ENCODE measurements at regions of chr11 and their contacts with region 1.

Region 1: DNA sequence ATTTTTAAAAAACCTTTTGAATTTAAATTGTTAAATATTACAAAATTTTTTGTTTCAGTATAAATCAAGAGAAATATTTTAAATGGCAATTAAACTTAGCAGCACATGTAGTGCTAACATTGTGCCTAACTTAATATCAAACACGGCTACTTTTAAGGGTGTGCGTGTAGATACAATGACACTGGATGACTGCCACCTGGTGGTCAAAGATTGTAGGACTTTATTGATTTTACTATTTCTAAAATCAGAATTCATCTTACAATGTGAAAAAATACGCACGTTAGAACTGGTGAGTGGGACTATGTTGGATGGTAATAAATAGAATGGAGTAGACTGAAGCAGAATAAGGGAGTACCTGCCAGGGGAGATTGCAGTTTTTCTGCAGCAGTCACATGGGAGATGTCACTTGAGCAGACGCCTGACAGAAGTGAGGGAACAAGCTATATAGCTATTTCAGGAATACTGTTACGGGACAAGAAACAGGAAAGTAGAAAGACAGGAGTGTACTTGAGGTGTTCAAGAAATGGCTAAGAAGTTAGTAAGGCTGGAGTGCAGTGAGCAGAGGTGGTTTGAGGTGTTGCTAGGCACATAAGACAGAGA is 52.9 kb downstream of the UVRAG start:
- DNase-seq: peak; percentile 79
- ATAC-seq: peak; percentile 76
- H3K4me3 ChIP-seq: no peak overlapping the region
- H3K4me3 Mint-ChIP-seq: no peak overlapping the region
- H3K27ac ChIP-seq: no peak overlapping the region
- H3K27ac Mint-ChIP-seq: no peak overlapping the region
- H3K4me1 ChIP-seq: peaks cover 17 to 27% of the 10 kb centered on the region in 2 donors
- H3K4me1 Mint-ChIP-seq: peaks cover 52% of the 10 kb centered on the region
- H3K27me3 ChIP-seq: no peaks in the 10 kb centered on the region
- H3K27me3 Mint-ChIP-seq: no peaks in the 10 kb centered on the region
- CTCF ChIP-seq: peak; percentile 86

Region 2: DNA sequence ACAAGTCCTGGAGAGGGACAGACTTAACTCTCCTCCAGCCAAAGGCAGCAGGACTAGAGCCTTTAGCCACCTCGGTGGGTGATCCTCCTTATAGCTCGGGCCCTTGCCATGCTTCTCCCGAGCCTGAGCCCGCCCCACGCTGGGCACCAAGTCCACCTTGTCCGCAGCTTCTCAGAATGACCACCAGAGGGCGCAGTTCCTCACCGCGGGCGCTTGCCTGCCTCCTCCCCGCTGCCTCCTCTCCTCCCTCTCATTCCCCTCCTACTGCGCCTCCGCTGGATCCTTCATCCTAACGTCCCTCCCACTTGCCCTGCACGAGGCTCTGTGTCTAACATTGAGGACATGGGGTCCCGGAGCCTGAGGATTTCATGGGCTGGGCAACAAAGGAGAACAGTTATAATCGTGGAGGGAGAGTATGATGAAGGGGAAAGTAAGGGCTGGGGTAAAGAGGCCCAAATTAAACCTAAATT is 161.6 kb before region 1 on chr11:
- CTCF ChIA-PET with region 1: interaction called, 8 read pairs
- POLR2A ChIA-PET with region 1: no interaction called
- intact Hi-C with region 1: loop called (anchors 5 kb)
- DNase-seq: peak; percentile 82
- ATAC-seq: peak; percentile 84
- H3K4me3 ChIP-seq: no peak overlapping the region
- H3K4me3 Mint-ChIP-seq: no peak overlapping the region
- H3K27ac ChIP-seq: no peak overlapping the region
- H3K27ac Mint-ChIP-seq: no peak overlapping the region
- H3K4me1 ChIP-seq: peaks cover 0 to 7% of the 10 kb centered on the region in 2 donors
- H3K4me1 Mint-ChIP-seq: peaks cover 12% of the 10 kb centered on the region
- H3K27me3 ChIP-seq: peaks cover 0 to 8% (median 2%) of the 10 kb centered on the region in 4 experiments
- H3K27me3 Mint-ChIP-seq: peaks cover 11% of the 10 kb centered on the region
- CTCF ChIP-seq: peak; percentile 97

Region 3: GRCh38 chr11:75773595-75774353 is 94.1 kb before region 1 on chr11:
- CTCF ChIA-PET with region 1: interaction called, 12 read pairs
- POLR2A ChIA-PET with region 1: no interaction called
- intact Hi-C with region 1: no loop called
- DNase-seq: peak; percentile 84
- ATAC-seq: peak; percentile 76
- H3K4me3 ChIP-seq: peak overlapping the region in 1 of 5 experiments; percentile 37
- H3K4me3 Mint-ChIP-seq: peak overlapping the region; percentile 33
- H3K27ac ChIP-seq: peak overlapping the region; percentile 77 to 84
- H3K27ac Mint-ChIP-seq: peak overlapping the region; percentile 73
- H3K4me1 ChIP-seq: peaks cover 45 to 70% of the 10 kb centered on the region in 2 donors
- H3K4me1 Mint-ChIP-seq: peaks cover 77% of the 10 kb centered on the region
- H3K27me3 ChIP-seq: no peaks in the 10 kb centered on the region
- H3K27me3 Mint-ChIP-seq: no peaks in the 10 kb centered on the region
- CTCF ChIP-seq: no peak

Region 4: GRCh38 chr11:75802913-75803820 is 64.7 kb before region 1 on chr11:
- CTCF ChIA-PET with region 1: interaction called, 405 read pairs
- POLR2A ChIA-PET with region 1: no interaction called
- intact Hi-C with region 1: loop called (anchors 1 kb)
- DNase-seq: peak; percentile 82
- ATAC-seq: peak; percentile 94
- H3K4me3 ChIP-seq: no peak overlapping the region
- H3K4me3 Mint-ChIP-seq: no peak overlapping the region
- H3K27ac ChIP-seq: no peak overlapping the region
- H3K27ac Mint-ChIP-seq: peak overlapping the region; percentile 32
- H3K4me1 ChIP-seq: peaks cover 3 to 22% of the 10 kb centered on the region in 2 donors
- H3K4me1 Mint-ChIP-seq: peaks cover 17% of the 10 kb centered on the region
- H3K27me3 ChIP-seq: no peaks in the 10 kb centered on the region
- H3K27me3 Mint-ChIP-seq: no peaks in the 10 kb centered on the region
- CTCF ChIP-seq: peak; percentile 96

Region 5: DNA sequence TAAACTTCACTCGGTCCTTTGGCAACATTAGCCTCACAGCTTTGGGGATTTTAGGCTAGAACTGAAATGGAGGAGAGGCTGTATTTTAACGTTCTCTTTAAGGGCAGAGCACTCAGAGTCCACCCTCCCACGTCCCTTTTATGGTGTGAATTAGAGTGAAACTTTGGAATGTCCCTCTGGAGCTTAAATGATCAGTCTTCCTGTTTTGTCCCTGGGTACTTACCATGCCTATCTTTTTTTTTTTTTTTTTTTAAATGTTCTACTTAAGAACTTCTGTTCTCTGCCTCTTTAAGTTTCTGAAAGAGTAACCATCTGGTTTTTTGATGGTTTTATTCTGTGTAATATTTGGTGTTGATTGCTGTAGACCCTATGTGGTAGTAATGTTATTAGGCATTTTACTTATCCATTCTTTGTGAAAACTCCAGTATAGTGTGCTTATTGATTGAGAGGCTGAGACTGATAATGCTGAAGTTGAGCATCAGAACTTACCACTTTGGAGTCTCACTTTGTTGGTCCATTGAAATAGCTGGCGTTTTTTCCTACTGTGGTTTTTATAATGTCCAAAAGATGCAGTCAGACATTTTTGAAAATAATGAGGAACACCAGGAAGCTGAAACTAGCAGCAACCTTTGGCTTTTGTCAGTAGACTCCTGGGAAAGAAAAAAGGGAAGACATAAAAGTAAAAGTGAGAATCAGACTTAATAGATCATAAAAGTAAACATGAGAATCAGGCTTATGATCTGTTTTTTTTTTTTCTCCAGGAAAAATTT is 41.2 kb before region 1 on chr11:
- CTCF ChIA-PET with region 1: interaction called, 33 read pairs
- POLR2A ChIA-PET with region 1: interaction called, 16 read pairs
- intact Hi-C with region 1: no loop called
- DNase-seq: peak; percentile 41
- ATAC-seq: no peak
- H3K4me3 ChIP-seq: peak overlapping the region in 1 of 5 experiments; percentile 26
- H3K4me3 Mint-ChIP-seq: peak overlapping the region; percentile 52
- H3K27ac ChIP-seq: peak overlapping the region; percentile 79 to 85
- H3K27ac Mint-ChIP-seq: peak overlapping the region; percentile 92
- H3K4me1 ChIP-seq: peaks cover 76 to 81% of the 10 kb centered on the region in 2 donors
- H3K4me1 Mint-ChIP-seq: peaks cover 80% of the 10 kb centered on the region
- H3K27me3 ChIP-seq: no peaks in the 10 kb centered on the region
- H3K27me3 Mint-ChIP-seq: no peaks in the 10 kb centered on the region
- CTCF ChIP-seq: no peak

Region 6: GRCh38 chr11:75850787-75851186 is 17.1 kb before region 1 on chr11:
- CTCF ChIA-PET with region 1: interaction called, 15 read pairs
- POLR2A ChIA-PET with region 1: no interaction called
- intact Hi-C with region 1: no loop called
- DNase-seq: no peak
- ATAC-seq: no peak
- H3K4me3 ChIP-seq: no peak overlapping the region
- H3K4me3 Mint-ChIP-seq: peak overlapping the region; percentile 55
- H3K27ac ChIP-seq: peak overlapping the region; percentile 1 to 52
- H3K27ac Mint-ChIP-seq: peak overlapping the region; percentile 64
- H3K4me1 ChIP-seq: peaks cover 16 to 25% of the 10 kb centered on the region in 2 donors
- H3K4me1 Mint-ChIP-seq: peaks cover 48% of the 10 kb centered on the region
- H3K27me3 ChIP-seq: no peaks in the 10 kb centered on the region
- H3K27me3 Mint-ChIP-seq: no peaks in the 10 kb centered on the region
- CTCF ChIP-seq: no peak

Region 7: GRCh38 chr11:75896843-75897419 is 29.1 kb after region 1 on chr11:
- CTCF ChIA-PET with region 1: interaction called, 34 read pairs
- POLR2A ChIA-PET with region 1: interaction called, 4 read pairs
- intact Hi-C with region 1: no loop called
- DNase-seq: peak; percentile 52
- ATAC-seq: no peak
- H3K4me3 ChIP-seq: no peak overlapping the region
- H3K4me3 Mint-ChIP-seq: no peak overlapping the region
- H3K27ac ChIP-seq: peak overlapping the region in 1 of 2 donors; percentile 6
- H3K27ac Mint-ChIP-seq: no peak overlapping the region
- H3K4me1 ChIP-seq: peaks cover 19% of the 10 kb centered on the region in 2 donors
- H3K4me1 Mint-ChIP-seq: peaks cover 41% of the 10 kb centered on the region
- H3K27me3 ChIP-seq: no peaks in the 10 kb centered on the region
- H3K27me3 Mint-ChIP-seq: no peaks in the 10 kb centered on the region
- CTCF ChIP-seq: peak; percentile 87